PC-9 (cell line): ENCODE measurements at regions of chr5 and their contacts with region 1.

Region 1: GRCh38 chr5:6820851-6821479 is 107.7 kb downstream of the TENT4A start:
- DNase-seq: peak; percentile 43 to 47
- H3K4me3 ChIP-seq: no peak overlapping the region
- H3K27ac ChIP-seq: no peak overlapping the region
- H3K4me1 ChIP-seq: no peaks in the 10 kb centered on the region
- H3K27me3 ChIP-seq: peaks cover 86% of the 10 kb centered on the region
- CTCF ChIP-seq: peak; percentile 97

Region 2: GRCh38 chr5:6976971-6977370 is 156.0 kb after region 1 on chr5:
- CTCF ChIA-PET with region 1: no interaction called
- POLR2A ChIA-PET with region 1: no interaction called
- intact Hi-C with region 1: no loop called
- DNase-seq: no peak
- H3K4me3 ChIP-seq: no peak overlapping the region
- H3K27ac ChIP-seq: no peak overlapping the region
- H3K4me1 ChIP-seq: no peaks in the 10 kb centered on the region
- H3K27me3 ChIP-seq: peaks cover 28% of the 10 kb centered on the region
- CTCF ChIP-seq: no peak

Region 3: GRCh38 chr5:7010576-7010975 is 189.6 kb after region 1 on chr5:
- CTCF ChIA-PET with region 1: no interaction called
- POLR2A ChIA-PET with region 1: no interaction called
- intact Hi-C with region 1: no loop called
- DNase-seq: peak in 1 of 2 experiments; percentile 31
- H3K4me3 ChIP-seq: no peak overlapping the region
- H3K27ac ChIP-seq: no peak overlapping the region
- H3K4me1 ChIP-seq: no peaks in the 10 kb centered on the region
- H3K27me3 ChIP-seq: no peaks in the 10 kb centered on the region
- CTCF ChIP-seq: no peak

Region 4: DNA sequence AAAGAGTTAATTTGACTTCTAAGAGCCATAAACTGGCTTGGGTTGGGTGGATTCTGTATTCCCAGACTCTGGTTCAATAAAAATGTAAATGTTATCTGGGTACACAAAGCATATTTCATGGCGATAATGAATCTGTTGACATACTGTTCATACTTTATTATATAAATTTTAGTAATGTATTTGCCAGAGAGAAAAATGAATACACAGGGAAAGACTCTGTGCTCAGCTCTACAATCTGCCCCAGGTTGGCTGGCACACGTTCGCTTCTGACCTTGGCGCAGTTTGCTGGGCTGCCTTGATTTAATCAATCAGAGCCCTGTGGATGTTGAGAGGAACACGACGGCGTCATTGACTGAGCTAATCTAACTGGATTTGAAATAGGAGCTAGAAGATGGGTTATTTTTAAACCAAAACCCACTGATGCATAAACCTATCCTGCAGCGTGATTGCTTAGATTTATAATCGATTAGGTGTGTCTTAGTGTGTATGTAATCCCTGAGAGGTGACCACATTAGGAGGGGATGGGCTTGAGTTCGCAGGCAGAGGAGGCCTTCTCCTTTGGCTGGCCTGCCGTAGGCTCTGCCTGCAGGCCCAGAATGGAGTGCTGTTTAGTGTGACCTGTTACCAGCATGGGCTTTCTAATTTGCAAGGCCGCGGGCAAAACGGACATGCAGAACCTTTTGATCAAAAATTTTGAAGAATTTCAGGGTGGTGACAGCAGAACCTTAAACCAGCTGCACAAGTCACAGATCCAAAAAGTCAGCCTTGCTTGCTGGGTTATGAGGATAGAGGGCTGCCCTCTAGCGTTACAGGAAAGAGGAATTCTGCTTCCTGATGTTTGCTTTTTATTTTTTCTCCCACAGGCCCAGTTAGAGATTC is 571.1 kb after region 1 on chr5:
- CTCF ChIA-PET with region 1: no interaction called
- POLR2A ChIA-PET with region 1: no interaction called
- intact Hi-C with region 1: loop called (anchors 5 kb)
- DNase-seq: no peak
- H3K4me3 ChIP-seq: no peak overlapping the region
- H3K27ac ChIP-seq: no peak overlapping the region
- H3K4me1 ChIP-seq: no peaks in the 10 kb centered on the region
- H3K27me3 ChIP-seq: peaks cover 9% of the 10 kb centered on the region; the same call in 1 of the 2 replicates
- CTCF ChIP-seq: peak; percentile 63

Region 5: GRCh38 chr5:7683753-7684152 is 862.8 kb after region 1 on chr5:
- CTCF ChIA-PET with region 1: no interaction called
- POLR2A ChIA-PET with region 1: no interaction called
- intact Hi-C with region 1: loop called (anchors 5 kb)
- DNase-seq: no peak
- H3K4me3 ChIP-seq: no peak overlapping the region
- H3K27ac ChIP-seq: no peak overlapping the region
- H3K4me1 ChIP-seq: no peaks in the 10 kb centered on the region
- H3K27me3 ChIP-seq: peaks cover 20% of the 10 kb centered on the region
- CTCF ChIP-seq: no peak